ENCODE measurements at regions of chr3 and their contacts with region 1.

Region 1: GRCh38 chr3:67654099-67654843 is at the start of gene SUCLG2:
- DNase-seq: peak; percentile 95
- H3K4me3 Mint-ChIP-seq: peak within 1 kb of the TSS; percentile 81
- H3K27ac Mint-ChIP-seq: peak within 1 kb of the TSS; percentile 88
- H3K4me1 Mint-ChIP-seq: peaks cover 54% of the 10 kb centered on the region
- H3K27me3 Mint-ChIP-seq: peaks cover 1% of the 10 kb centered on the region
- total RNA-seq, gene SUCLG2: 33.2 and 34.6 TPM in 2 replicates

Region 2: DNA sequence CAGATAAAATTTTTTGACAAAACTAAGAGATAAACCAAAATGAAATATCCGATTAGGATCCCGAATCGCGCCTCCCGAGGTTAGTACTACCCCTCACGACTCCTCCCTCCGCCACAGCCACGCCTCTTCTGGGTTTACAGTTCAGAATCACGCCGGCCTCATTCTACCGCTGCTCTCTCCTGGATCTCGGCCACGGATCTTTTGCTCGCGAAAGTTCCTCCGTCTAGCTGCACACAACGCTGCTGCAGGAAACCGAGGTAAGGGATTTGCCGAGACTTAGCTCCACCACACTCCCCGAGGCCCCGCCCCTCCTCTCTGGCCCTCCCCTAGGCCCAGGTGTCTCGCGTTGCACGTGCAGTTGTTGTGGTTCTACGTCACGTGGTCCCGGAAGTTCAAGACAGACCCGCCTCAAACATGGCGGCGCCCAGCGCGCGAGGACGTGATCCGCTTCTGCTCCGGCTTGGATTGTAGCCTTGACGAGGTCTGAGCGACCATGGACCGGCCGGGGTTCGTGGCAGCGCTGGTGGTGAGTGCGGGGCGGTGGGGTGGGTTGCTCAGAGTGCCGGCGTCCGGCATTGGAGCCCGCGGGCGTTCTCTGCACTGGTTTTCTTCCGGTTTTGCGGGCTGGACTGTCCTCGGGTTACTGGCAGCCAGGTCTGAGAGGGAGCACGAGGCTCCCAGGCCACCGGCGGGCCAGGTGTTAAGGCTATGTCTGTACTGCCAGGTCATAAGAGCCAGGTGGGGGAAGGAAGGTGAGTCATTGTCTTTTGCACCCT is 1433.5 kb before region 1 on chr3 and contains the start of gene SLC25A26:
- intact Hi-C with region 1: loop called (anchors 5 kb)
- DNase-seq: peak; percentile 99
- H3K4me3 Mint-ChIP-seq: peak within 1 kb of the TSS; percentile 98
- H3K27ac Mint-ChIP-seq: peak within 1 kb of the TSS; percentile 98
- H3K4me1 Mint-ChIP-seq: peaks cover 37% of the 10 kb centered on the region
- H3K27me3 Mint-ChIP-seq: no peaks in the 10 kb centered on the region
- total RNA-seq, gene SLC25A26: 17.7 and 22.1 TPM in 2 replicates

Region 3: DNA sequence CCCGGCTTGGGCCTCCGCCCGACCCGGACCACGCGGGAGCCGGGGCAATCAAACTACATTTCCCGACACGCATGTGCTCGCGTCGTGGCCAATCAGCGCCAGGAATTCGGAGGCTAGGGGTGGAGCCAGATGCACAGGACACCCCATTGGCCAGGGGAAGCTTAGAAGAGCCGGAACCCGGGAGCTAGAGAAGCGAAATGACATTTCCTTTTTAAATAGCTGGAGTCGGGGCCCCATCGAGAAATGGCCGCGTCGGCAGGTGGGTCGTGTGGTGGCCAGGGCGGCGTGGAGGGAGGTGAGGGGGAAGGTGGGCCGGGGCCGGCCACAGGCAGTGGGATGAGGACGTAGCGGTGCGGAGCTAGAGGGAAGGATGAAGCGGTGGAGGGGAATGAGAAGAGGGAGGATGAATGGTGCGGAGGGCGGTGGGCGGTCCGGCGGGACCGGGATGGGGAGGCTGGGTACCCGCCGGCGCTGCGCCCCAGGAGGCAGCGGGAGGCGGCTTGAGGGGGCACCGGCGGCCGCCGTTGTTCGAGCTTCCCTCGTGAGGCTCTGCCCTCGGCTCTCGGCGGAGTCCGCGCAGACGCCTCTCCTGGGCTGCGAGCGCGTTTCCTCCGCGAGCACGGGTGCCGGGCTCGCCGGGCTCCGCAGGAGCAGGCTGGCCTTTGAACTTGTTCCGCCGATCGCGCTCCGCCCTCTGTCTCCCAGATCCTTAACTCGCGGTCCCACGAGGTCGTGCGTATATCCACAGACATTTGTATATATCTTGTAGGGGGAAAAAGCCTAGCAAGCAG is 656.0 kb before region 1 on chr3 and contains the start of gene KBTBD8:
- intact Hi-C with region 1: loop called (anchors 2 kb)
- DNase-seq: peak; percentile 99
- H3K4me3 Mint-ChIP-seq: peak within 1 kb of the TSS; percentile 89
- H3K27ac Mint-ChIP-seq: peak within 1 kb of the TSS; percentile 92
- H3K4me1 Mint-ChIP-seq: peaks cover 29% of the 10 kb centered on the region
- H3K27me3 Mint-ChIP-seq: peaks cover 24% of the 10 kb centered on the region
- total RNA-seq, gene KBTBD8: 16.8 and 17.0 TPM in 2 replicates

Region 4: GRCh38 chr3:67349551-67350174 is 304.6 kb before region 1 on chr3:
- intact Hi-C with region 1: loop called (anchors 1 kb)
- DNase-seq: peak; percentile 68
- H3K4me3 Mint-ChIP-seq: no peak overlapping the region
- H3K27ac Mint-ChIP-seq: peak overlapping the region; percentile 2
- H3K4me1 Mint-ChIP-seq: peaks cover 10% of the 10 kb centered on the region
- H3K27me3 Mint-ChIP-seq: no peaks in the 10 kb centered on the region

Region 5: DNA sequence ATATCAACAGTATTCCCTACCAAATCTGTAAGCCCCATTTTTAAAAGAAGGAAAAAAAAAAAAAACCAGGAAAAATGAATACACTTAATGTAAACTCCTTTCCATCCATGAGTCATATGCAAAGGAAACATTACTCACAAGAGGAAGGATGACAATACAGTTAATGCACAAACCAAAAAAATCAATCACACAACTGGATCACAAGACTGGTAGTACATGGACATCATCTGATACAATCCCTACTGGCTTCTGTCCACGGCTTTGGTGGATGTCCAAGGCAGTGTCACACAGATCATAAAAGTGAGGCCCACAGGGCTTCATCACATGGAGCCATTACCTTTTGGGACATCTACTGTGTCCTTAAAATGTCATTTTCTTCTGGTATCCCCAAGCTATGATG is 43.8 kb before region 1 on chr3:
- intact Hi-C with region 1: loop called (anchors 5 kb)
- DNase-seq: no peak
- H3K4me3 Mint-ChIP-seq: no peak overlapping the region
- H3K27ac Mint-ChIP-seq: no peak overlapping the region
- H3K4me1 Mint-ChIP-seq: peaks cover 11% of the 10 kb centered on the region
- H3K27me3 Mint-ChIP-seq: no peaks in the 10 kb centered on the region

Region 6: DNA sequence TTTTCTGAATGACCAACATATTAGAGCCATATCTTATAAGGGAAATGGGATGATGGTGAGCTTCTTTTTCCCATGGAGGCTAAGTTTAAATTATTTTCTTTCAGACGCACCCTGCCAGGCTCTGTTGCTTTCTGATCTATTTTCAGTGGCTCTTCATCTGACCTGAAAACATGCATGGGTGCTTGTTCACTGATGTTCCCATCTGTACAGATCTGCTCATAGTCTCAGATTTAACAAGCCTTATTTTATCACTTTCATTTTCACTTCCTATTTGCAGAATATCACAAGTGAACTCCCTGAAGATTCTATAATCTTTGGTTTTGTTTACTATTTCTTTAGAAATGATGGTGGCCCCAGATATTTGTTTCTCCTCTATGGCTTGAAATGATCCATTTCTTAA is 31.2 kb after region 1 on chr3:
- intact Hi-C with region 1: loop called (anchors 2 kb)
- DNase-seq: peak; percentile 66
- H3K4me3 Mint-ChIP-seq: peak overlapping the region; percentile 46
- H3K27ac Mint-ChIP-seq: peak overlapping the region; percentile 7
- H3K4me1 Mint-ChIP-seq: peaks cover 19% of the 10 kb centered on the region
- H3K27me3 Mint-ChIP-seq: no peaks in the 10 kb centered on the region

Region 7: GRCh38 chr3:67704322-67704721 is 50.1 kb after region 1 on chr3:
- intact Hi-C with region 1: no loop called
- DNase-seq: no peak
- H3K4me3 Mint-ChIP-seq: no peak overlapping the region
- H3K27ac Mint-ChIP-seq: no peak overlapping the region
- H3K4me1 Mint-ChIP-seq: no peaks in the 10 kb centered on the region
- H3K27me3 Mint-ChIP-seq: no peaks in the 10 kb centered on the region

Region 8: GRCh38 chr3:67863869-67864268 is 209.6 kb after region 1 on chr3:
- intact Hi-C with region 1: no loop called
- DNase-seq: no peak
- H3K4me3 Mint-ChIP-seq: no peak overlapping the region
- H3K27ac Mint-ChIP-seq: no peak overlapping the region
- H3K4me1 Mint-ChIP-seq: no peaks in the 10 kb centered on the region
- H3K27me3 Mint-ChIP-seq: no peaks in the 10 kb centered on the region

Measured in activated CD4-positive, alpha-beta T cell treated with anti-CD3 and anti-CD28 coated beads, Interleukin-2, amount 10 ng/mL, durations not matched to agents 24 days and 14 days (primary cell).